IMR-90 (cell line): ENCODE measurements at regions of chr2 and their contacts with region 1.

Region 1: GRCh38 chr2:162379719-162380580 is 36.0 kb downstream of the GCA start:
- DNase-seq: no peak
- ATAC-seq: no peak
- H3K4me3 ChIP-seq: no peak overlapping the region
- H3K27ac ChIP-seq: no peak overlapping the region
- H3K4me1 ChIP-seq: no peaks in the 10 kb centered on the region
- H3K27me3 ChIP-seq: no peaks in the 10 kb centered on the region
- CTCF ChIP-seq: no peak
- POLR2A ChIP-seq: no peak
- RAD21 ChIP-seq: no peak

Region 2: GRCh38 chr2:164257742-164258141 is 1877.8 kb after region 1 on chr2:
- CTCF ChIA-PET with region 1: no interaction called
- POLR2A ChIA-PET with region 1: interaction called, 10 read pairs
- dilution Hi-C with region 1: no loop called
- in situ Hi-C with region 1: no loop called
- intact Hi-C with region 1: no loop called
- DNase-seq: no peak
- ATAC-seq: no peak
- H3K4me3 ChIP-seq: no peak overlapping the region
- H3K27ac ChIP-seq: no peak overlapping the region
- H3K4me1 ChIP-seq: no peaks in the 10 kb centered on the region
- H3K27me3 ChIP-seq: no peaks in the 10 kb centered on the region
- CTCF ChIP-seq: no peak
- POLR2A ChIP-seq: no peak
- RAD21 ChIP-seq: no peak